PC-9 (cell line): ENCODE measurements at regions of chr5 and their contacts with region 1.

Region 1: DNA sequence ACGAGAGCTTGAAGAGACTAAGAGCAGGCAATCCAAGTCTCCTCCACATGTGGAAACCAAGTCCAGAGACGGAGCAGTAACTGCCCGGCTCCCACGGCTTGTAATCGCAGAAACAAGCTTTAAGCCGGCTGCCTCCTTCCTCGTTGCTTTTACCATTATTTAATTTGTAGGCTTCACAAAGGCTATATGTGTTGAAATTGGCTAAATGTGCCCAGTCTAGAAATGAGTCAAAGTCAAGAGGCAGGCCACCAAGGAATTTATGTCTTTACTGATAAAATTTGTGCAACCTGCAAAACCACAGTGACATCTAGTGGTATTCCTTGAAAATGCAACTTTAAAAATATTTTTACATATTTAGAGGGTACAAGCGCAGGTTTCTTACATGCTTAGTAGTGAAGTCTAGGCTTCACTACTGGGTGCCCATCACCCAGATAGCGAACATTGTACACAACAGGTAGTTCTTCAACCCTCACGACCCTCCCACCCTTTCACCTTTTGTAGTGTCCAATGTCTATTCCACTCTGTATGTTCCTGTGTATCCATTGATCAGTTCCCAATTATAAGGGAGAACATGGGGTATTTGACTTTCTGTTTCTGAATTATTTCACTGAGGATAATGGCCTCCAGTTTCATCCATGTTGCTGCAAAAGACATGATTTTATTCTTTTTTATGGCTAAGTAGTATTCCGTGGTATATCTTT is 33.5 kb upstream of the EBF1 start:
- DNase-seq: peak; percentile 3 to 45
- H3K4me3 ChIP-seq: no peak overlapping the region
- H3K27ac ChIP-seq: no peak overlapping the region
- H3K4me1 ChIP-seq: no peaks in the 10 kb centered on the region
- H3K27me3 ChIP-seq: peaks cover 32% of the 10 kb centered on the region
- CTCF ChIP-seq: peak; percentile 89

Region 2: DNA sequence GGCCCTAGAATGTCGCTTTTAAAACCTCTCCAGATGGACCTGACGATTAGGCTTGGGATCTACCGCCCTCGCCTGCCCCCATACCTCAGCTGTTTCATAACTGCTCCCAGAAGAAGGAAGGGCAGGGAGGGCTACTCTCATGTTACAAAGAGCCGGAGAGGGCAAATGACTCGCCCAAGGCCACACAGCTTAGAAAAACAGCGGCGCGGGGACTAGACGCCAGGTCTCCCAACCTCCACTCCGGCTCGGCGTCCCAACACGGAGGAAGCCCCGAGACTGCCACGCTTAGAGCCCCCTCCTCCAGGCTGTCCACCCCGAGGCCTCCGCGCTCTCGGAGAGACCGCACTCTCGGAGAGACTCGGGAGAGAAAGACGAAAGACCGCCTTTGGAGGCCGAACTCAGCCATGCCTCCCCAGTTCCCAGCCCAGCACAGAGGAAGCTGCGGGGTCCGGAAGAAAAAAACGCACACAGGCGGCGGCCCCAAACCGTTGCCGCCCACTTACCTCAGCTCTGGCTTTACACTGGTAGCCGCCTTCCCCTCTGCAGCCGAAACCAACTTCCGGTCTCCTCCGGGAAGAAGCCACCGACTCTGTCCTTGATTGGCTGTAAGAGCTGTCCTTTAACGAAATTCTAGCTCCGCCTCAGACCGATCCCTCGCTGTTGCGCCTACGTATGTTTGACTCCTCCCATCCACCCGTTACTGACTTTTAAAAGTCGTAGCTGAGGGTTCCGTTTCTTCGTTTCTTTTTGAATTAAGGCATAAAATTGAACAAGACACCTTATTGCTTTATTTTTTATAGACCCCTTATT is 1990.7 kb before region 1 on chr5 and contains the start of gene MED7:
- CTCF ChIA-PET with region 1: no interaction called
- POLR2A ChIA-PET with region 1: no interaction called
- intact Hi-C with region 1: loop called (anchors 10 kb)
- DNase-seq: peak; percentile 93
- H3K4me3 ChIP-seq: peak within 1 kb of the TSS; percentile 69
- H3K27ac ChIP-seq: peak within 1 kb of the TSS; percentile 57
- H3K4me1 ChIP-seq: peaks cover 11% of the 10 kb centered on the region
- H3K27me3 ChIP-seq: peaks cover 5% of the 10 kb centered on the region; the same call in 1 of the 2 replicates
- CTCF ChIP-seq: no peak
- total RNA-seq, gene MED7: 9.4 and 11.8 TPM in 2 replicates

Region 3: GRCh38 chr5:157820593-157821252 is 1312.5 kb before region 1 on chr5:
- CTCF ChIA-PET with region 1: no interaction called
- POLR2A ChIA-PET with region 1: no interaction called
- intact Hi-C with region 1: loop called (anchors 5 kb)
- DNase-seq: no peak
- H3K4me3 ChIP-seq: no peak overlapping the region
- H3K27ac ChIP-seq: no peak overlapping the region
- H3K4me1 ChIP-seq: no peaks in the 10 kb centered on the region
- H3K27me3 ChIP-seq: no peaks in the 10 kb centered on the region
- CTCF ChIP-seq: peak; percentile 61; the same call in 1 of the 2 replicates

Region 4: GRCh38 chr5:158174918-158175851 is 958.0 kb before region 1 on chr5:
- CTCF ChIA-PET with region 1: no interaction called
- POLR2A ChIA-PET with region 1: no interaction called
- intact Hi-C with region 1: loop called (anchors 2 kb)
- DNase-seq: peak in 1 of 2 experiments; percentile 32
- H3K4me3 ChIP-seq: no peak overlapping the region
- H3K27ac ChIP-seq: no peak overlapping the region
- H3K4me1 ChIP-seq: no peaks in the 10 kb centered on the region
- H3K27me3 ChIP-seq: peaks cover 32% of the 10 kb centered on the region
- CTCF ChIP-seq: peak; percentile 69

Region 5: GRCh38 chr5:158958021-158958994 is 174.9 kb before region 1 on chr5:
- CTCF ChIA-PET with region 1: no interaction called
- POLR2A ChIA-PET with region 1: no interaction called
- intact Hi-C with region 1: no loop called
- DNase-seq: no peak
- H3K4me3 ChIP-seq: no peak overlapping the region
- H3K27ac ChIP-seq: no peak overlapping the region
- H3K4me1 ChIP-seq: no peaks in the 10 kb centered on the region
- H3K27me3 ChIP-seq: peaks cover 45% of the 10 kb centered on the region
- CTCF ChIP-seq: no peak

Region 6: GRCh38 chr5:159002171-159002570 is 131.0 kb before region 1 on chr5:
- CTCF ChIA-PET with region 1: interaction called, 12 read pairs
- POLR2A ChIA-PET with region 1: no interaction called
- intact Hi-C with region 1: no loop called
- DNase-seq: no peak
- H3K4me3 ChIP-seq: no peak overlapping the region
- H3K27ac ChIP-seq: no peak overlapping the region
- H3K4me1 ChIP-seq: no peaks in the 10 kb centered on the region
- H3K27me3 ChIP-seq: peaks cover 17% of the 10 kb centered on the region; the same call in 1 of the 2 replicates
- CTCF ChIP-seq: no peak

Region 7: DNA sequence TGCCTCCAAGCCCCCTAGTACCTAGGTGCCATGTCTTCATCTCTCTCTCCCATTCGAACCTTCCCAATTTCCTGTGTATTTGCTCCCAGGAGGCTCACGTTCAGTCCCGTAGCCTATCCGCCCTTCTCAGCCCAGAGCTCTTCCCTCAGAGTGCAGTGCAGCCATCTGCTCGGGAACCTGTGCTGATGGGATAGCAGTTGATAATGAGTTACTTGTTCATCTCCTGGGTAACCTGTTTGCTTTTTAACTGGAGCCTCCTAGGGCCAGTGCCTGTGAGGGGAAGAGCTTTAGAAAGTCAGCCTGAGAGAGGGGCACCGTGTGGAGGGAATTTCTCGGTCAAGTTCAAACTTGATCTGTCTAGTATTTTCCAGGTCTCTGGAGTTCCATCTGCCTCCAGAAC is 426.9 kb after region 1 on chr5:
- CTCF ChIA-PET with region 1: no interaction called
- POLR2A ChIA-PET with region 1: no interaction called
- intact Hi-C with region 1: no loop called
- DNase-seq: no peak
- H3K4me3 ChIP-seq: no peak overlapping the region
- H3K27ac ChIP-seq: no peak overlapping the region
- H3K4me1 ChIP-seq: no peaks in the 10 kb centered on the region
- H3K27me3 ChIP-seq: no peaks in the 10 kb centered on the region
- CTCF ChIP-seq: no peak